CD4-positive, alpha-beta memory T cell (primary cell): ENCODE measurements at regions of chr9 and their contacts with region 1.

Region 1: DNA sequence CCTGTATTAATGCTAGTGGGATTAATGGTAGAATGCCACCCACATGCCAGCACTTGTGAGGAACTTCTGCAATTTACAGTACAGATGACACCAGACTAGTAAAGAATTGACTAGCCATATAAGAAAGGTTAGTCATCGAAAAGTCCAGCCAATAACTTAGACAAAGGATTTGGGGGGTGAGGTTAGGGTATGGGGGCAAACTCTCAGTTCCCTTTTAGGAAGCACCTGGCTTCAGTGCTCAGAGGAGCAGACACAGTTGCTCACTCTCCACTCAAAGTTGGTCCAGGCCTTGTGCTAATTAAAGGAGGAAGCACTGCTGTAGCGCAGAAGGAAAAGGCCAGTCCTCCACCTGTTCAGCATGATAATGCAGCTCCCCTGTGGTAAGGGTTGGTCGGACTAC is 25.2 kb downstream of the TGFBR1 start:
- DNase-seq: no peak
- H3K4me3 ChIP-seq: no peak overlapping the region
- H3K4me3 Mint-ChIP-seq: peak overlapping the region in 1 of 8 donors; percentile 38
- H3K27ac ChIP-seq: no peak overlapping the region
- H3K27ac Mint-ChIP-seq: peak overlapping the region in 2 of 7 donors; percentile 12 to 63
- H3K4me1 ChIP-seq: peaks cover 82% of the 10 kb centered on the region
- H3K4me1 Mint-ChIP-seq: peaks cover 58 to 91% (median 76%) of the 10 kb centered on the region in 4 donors
- H3K27me3 ChIP-seq: no peaks in the 10 kb centered on the region
- H3K27me3 Mint-ChIP-seq: no peaks in the 10 kb centered on the region

Region 2: DNA sequence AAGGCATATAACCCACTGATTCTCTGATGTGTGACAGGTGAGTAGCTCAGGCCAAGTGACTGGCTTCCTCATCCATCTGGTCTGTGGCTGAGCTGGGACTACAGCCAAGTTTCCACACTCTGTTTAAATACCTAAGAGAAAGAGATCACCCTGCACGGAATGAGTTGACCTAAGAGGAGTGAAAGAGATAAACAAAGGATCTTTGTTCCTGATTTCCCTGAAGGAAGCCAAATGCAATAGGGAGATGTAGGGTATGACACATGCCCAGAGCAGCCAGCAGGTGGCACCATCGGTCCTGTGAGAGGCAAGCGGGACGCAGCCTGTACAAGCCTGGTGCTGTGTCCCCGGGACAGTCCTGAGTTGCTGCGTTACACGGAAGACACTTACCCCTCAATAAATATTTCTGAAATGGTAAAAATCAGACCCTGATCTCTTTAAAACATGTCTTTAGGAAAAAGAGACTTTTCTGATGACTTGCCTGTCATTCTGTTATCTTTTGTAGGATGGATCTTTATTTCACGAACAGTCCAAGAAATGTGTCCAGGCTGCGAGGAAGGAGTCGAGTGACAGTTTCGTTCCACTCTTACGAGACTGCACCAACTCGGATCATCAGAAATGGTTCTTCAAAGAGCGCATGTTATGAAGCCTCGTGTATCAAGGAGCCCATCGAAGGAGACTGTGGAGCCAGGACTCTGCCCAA is 281.5 kb before region 1 on chr9:
- CTCF ChIA-PET with region 1: interaction called, 11 read pairs
- POLR2A ChIA-PET with region 1: no interaction called
- intact Hi-C with region 1: no loop called
- DNase-seq: peak; percentile 51 to 61 (median 58)
- H3K4me3 ChIP-seq: no peak overlapping the region
- H3K4me3 Mint-ChIP-seq: no peak overlapping the region
- H3K27ac ChIP-seq: no peak overlapping the region
- H3K27ac Mint-ChIP-seq: peak overlapping the region in 3 of 7 donors; percentile 38 to 66 (median 63)
- H3K4me1 ChIP-seq: no peaks in the 10 kb centered on the region
- H3K4me1 Mint-ChIP-seq: peaks cover 0 to 8% (median 2%) of the 10 kb centered on the region in 4 donors
- H3K27me3 ChIP-seq: no peaks in the 10 kb centered on the region
- H3K27me3 Mint-ChIP-seq: no peaks in the 10 kb centered on the region

Region 3: GRCh38 chr9:98998441-98999151 is 131.5 kb before region 1 on chr9:
- CTCF ChIA-PET with region 1: interaction called, 480 read pairs
- POLR2A ChIA-PET with region 1: interaction called, 4 read pairs
- intact Hi-C with region 1: no loop called
- DNase-seq: peak; percentile 32 to 52 (median 40)
- H3K4me3 ChIP-seq: no peak overlapping the region
- H3K4me3 Mint-ChIP-seq: no peak overlapping the region
- H3K27ac ChIP-seq: no peak overlapping the region
- H3K27ac Mint-ChIP-seq: no peak overlapping the region
- H3K4me1 ChIP-seq: peaks cover 16% of the 10 kb centered on the region
- H3K4me1 Mint-ChIP-seq: peaks cover 15 to 25% (median 16%) of the 10 kb centered on the region in 4 donors
- H3K27me3 ChIP-seq: no peaks in the 10 kb centered on the region
- H3K27me3 Mint-ChIP-seq: peaks cover 0 to 5% of the 10 kb centered on the region in 2 donors

Region 4: DNA sequence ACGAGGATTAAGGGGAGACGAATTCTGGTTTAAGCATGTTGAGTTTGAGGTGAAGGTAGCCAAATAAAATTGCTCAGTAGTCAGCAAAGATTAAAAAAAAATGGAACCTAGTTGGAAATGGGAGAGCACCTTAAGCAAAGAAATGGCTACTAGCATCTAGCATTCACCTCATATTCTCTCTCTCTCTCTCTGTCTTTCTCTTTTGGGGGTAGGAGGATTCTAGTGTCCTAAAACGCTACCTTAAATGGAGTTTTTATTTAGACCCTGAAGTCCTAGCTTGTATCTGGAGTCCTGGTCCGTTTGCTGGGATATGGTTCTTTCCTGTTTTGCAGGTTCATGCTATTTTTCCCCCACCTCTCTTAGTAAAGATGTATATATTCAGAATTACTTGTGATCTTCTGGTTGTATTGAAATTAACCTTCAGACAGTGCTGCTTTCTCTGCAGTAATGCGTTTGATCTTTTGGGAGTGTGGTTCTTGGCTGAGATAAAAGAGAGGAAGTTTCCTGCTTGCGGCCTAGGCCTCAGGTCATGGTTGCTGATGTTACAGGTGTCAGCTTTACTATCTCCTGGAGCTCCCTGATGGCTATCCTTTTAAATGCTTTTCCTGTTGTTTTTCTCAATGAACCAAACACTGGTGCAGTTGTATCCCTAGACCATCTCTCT is 17.2 kb before region 1 on chr9:
- CTCF ChIA-PET with region 1: interaction called, 10 read pairs
- POLR2A ChIA-PET with region 1: interaction called, 10 read pairs
- intact Hi-C with region 1: loop called (anchors 2 kb)
- DNase-seq: peak; percentile 79 to 85 (median 80)
- H3K4me3 ChIP-seq: peak overlapping the region in 1 of 2 donors; percentile 35
- H3K4me3 Mint-ChIP-seq: peak overlapping the region; percentile 37 to 85 (median 72)
- H3K27ac ChIP-seq: peak overlapping the region; percentile 27
- H3K27ac Mint-ChIP-seq: peak overlapping the region; percentile 60 to 90 (median 79)
- H3K4me1 ChIP-seq: peaks cover 94% of the 10 kb centered on the region
- H3K4me1 Mint-ChIP-seq: peaks cover 75 to 95% (median 83%) of the 10 kb centered on the region in 4 donors
- H3K27me3 ChIP-seq: no peaks in the 10 kb centered on the region
- H3K27me3 Mint-ChIP-seq: no peaks in the 10 kb centered on the region

Region 5: GRCh38 chr9:99118782-99119466 is 11.1 kb before region 1 on chr9:
- CTCF ChIA-PET with region 1: interaction called, 10 read pairs
- POLR2A ChIA-PET with region 1: interaction called, 11 read pairs
- intact Hi-C with region 1: no loop called
- DNase-seq: peak; percentile 66 to 78 (median 70)
- H3K4me3 ChIP-seq: peak overlapping the region; percentile 5 to 7
- H3K4me3 Mint-ChIP-seq: peak overlapping the region; percentile 49 to 95 (median 78)
- H3K27ac ChIP-seq: no peak overlapping the region
- H3K27ac Mint-ChIP-seq: peak overlapping the region; percentile 33 to 95 (median 78)
- H3K4me1 ChIP-seq: peaks cover 90% of the 10 kb centered on the region
- H3K4me1 Mint-ChIP-seq: peaks cover 65 to 91% (median 75%) of the 10 kb centered on the region in 4 donors
- H3K27me3 ChIP-seq: no peaks in the 10 kb centered on the region
- H3K27me3 Mint-ChIP-seq: no peaks in the 10 kb centered on the region

Region 6: GRCh38 chr9:99140685-99141314 is 10.7 kb after region 1 on chr9:
- CTCF ChIA-PET with region 1: interaction called, 28 read pairs
- POLR2A ChIA-PET with region 1: no interaction called
- intact Hi-C with region 1: no loop called
- DNase-seq: peak; percentile 50 to 56 (median 53)
- H3K4me3 ChIP-seq: no peak overlapping the region
- H3K4me3 Mint-ChIP-seq: peak overlapping the region in 1 of 8 donors; percentile 21
- H3K27ac ChIP-seq: no peak overlapping the region
- H3K27ac Mint-ChIP-seq: peak overlapping the region; percentile 16 to 58 (median 43)
- H3K4me1 ChIP-seq: peaks cover 16% of the 10 kb centered on the region
- H3K4me1 Mint-ChIP-seq: peaks cover 21 to 31% (median 24%) of the 10 kb centered on the region in 4 donors
- H3K27me3 ChIP-seq: no peaks in the 10 kb centered on the region
- H3K27me3 Mint-ChIP-seq: no peaks in the 10 kb centered on the region

Region 7: GRCh38 chr9:99158629-99159028 is 28.6 kb after region 1 on chr9:
- CTCF ChIA-PET with region 1: no interaction called
- POLR2A ChIA-PET with region 1: no interaction called
- intact Hi-C with region 1: no loop called
- DNase-seq: no peak
- H3K4me3 ChIP-seq: no peak overlapping the region
- H3K4me3 Mint-ChIP-seq: no peak overlapping the region
- H3K27ac ChIP-seq: no peak overlapping the region
- H3K27ac Mint-ChIP-seq: no peak overlapping the region
- H3K4me1 ChIP-seq: no peaks in the 10 kb centered on the region
- H3K4me1 Mint-ChIP-seq: peaks cover 0 to 7% (median 4%) of the 10 kb centered on the region in 4 donors
- H3K27me3 ChIP-seq: no peaks in the 10 kb centered on the region
- H3K27me3 Mint-ChIP-seq: peaks cover 0 to 1% of the 10 kb centered on the region in 2 donors

Region 8: DNA sequence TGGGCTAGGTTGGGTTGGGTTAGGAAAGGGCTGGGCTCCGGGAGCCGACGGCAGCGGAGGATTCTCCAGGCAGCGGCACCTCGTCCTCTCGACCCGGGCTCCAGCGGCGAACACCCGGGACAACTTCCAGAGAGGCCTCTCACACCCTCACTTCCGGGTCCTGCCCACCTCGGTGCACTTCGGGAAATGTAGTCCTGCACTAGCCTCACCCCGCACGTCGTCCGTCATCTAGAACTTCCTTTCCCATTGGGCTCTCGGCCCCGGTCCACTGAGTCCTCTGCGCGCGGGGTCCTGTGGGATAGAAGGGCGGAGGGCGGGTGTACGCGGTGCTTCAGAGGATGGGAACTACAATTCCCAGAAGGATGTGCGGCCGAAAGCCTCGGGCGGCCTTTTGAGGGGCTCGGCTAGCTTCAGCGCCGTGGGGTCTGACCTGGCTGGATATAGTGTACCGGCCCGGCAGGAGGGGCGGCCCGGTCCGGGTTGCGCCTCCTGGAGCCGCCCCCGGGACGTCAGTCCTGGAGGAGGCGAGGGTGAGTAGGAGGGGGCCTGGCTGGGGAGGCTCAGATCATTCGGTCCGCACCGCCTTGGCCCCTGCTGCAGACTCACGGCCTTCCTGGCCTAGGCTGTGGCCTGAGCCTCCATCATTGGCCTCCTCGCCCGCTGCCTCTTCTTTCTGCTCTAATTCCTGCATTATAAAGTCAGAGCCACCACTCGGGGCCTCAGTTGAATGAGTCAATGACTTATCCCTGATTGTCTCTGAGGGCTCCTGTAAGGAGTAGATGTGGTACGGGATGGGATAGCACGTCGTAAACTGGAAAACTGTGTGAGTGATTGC is 969.0 kb after region 1 on chr9 and contains the starts of genes ERP44 and INVS:
- CTCF ChIA-PET with region 1: no interaction called
- POLR2A ChIA-PET with region 1: no interaction called
- intact Hi-C with region 1: loop called (anchors 10 kb)
- DNase-seq: peak; percentile 96 to 99 (median 96)
- H3K4me3 ChIP-seq: peak within 1 kb of the TSS; percentile 85 to 89
- H3K4me3 Mint-ChIP-seq: peak within 1 kb of the TSS; percentile 94 to 100 (median 100)
- H3K27ac ChIP-seq: peak within 1 kb of the TSS; percentile 80
- H3K27ac Mint-ChIP-seq: peak within 1 kb of the TSS; percentile 91 to 99 (median 98)
- H3K4me1 ChIP-seq: peaks cover 26% of the 10 kb centered on the region
- H3K4me1 Mint-ChIP-seq: peaks cover 21 to 56% (median 36%) of the 10 kb centered on the region in 4 donors
- H3K27me3 ChIP-seq: no peaks in the 10 kb centered on the region
- H3K27me3 Mint-ChIP-seq: no peaks in the 10 kb centered on the region
- total RNA-seq, gene ERP44: 16.5 to 17.0 TPM
- total RNA-seq, gene INVS: 17.6 to 22.9 TPM